HEK293T (cell line): ENCODE measurements at regions of chr12 and their contacts with region 1.

Region 1: DNA sequence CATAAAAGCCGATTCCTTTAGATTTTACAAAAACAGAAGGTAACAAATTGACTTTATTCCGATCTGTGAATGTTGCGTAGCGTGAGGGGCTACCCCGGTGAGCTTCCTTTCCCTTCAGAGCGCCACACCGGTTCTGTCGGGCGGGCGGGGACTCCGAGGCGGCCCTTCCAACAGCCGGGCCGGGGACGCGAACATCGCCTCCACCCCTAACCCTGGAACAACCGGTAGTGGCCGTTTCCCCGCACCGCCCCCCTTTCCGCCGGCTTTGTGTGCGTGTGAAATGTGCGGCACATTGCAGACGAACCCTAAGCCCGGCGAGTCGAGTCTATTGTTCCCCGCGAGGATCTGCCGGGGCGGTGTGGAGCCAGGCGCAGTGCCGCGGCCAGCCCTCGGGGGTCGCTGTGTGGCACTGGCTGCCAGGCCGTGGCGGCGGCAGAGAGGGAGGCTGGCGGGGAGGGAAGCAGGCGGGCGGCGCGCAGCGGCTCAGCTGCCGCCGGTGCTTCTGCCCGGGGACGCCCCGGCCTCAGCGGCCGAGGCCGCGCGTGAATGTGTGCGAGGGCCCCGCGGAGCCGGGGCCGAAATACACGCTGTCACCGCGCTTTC is 775 bp upstream of the ARID2 start:
- DNase-seq: peak; percentile 72

Region 2: DNA sequence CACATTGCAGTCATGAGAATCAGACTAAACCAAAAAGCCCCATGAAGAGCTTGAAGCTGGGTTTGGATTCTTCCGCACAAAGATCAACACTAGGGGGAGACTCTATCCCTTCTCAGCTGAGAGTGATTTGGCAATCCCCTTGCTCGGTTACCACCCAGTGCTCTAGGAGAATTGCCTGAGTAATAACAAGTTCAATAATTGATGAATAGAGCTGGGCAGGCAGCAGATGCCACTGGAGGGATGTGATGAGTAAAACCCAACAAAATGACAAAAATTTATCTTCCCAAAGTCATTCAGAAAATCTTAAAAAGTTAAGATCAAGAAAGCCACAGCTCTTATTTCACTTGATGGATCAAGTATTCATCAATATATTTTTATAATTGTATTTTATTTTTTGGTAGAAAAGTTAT is 184.8 kb before region 1 on chr12:
- CTCF ChIA-PET with region 1: interaction called, 4 read pairs
- POLR2A ChIA-PET with region 1: interaction called, 10 read pairs
- DNase-seq: peak; percentile 75

Region 3: GRCh38 chr12:45990468-45991283 is 261.9 kb after region 1 on chr12 and contains the start of gene SCAF11:
- CTCF ChIA-PET with region 1: no interaction called
- POLR2A ChIA-PET with region 1: interaction called, 12 read pairs
- DNase-seq: peak; percentile 94